Caco-2 (cell line): ENCODE measurements at regions of chr3 and their contacts with region 1.

Region 1: DNA sequence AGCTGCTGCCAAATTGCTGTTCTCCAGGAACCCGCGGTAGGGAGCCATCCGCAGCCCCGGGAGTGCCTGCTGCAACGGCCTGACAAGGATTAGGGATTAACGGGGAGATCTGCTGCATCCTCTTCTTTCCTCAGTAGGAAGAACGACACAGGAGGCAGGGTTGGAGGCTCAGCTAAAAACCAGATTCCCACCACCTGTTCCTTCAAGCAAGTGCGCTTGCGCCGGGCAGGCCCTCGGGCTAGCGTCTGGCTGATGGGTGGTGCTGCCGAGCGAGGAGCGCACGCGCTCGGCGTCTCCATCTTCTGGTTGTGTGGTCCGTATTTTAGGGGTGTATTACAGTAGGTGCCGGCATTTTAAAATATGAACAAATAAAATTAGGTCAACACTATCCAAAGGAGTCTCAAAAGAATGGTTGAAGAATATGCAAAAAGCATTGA is 25.4 kb upstream of the SLC25A26 start:
- DNase-seq: peak; percentile 58 to 62
- H3K4me3 ChIP-seq: peak overlapping the region; percentile 9
- H3K4me3 Mint-ChIP-seq: peak overlapping the region; percentile 45
- H3K27ac Mint-ChIP-seq: no peak overlapping the region
- H3K4me1 ChIP-seq: no peaks in the 10 kb centered on the region
- H3K4me1 Mint-ChIP-seq: no peaks in the 10 kb centered on the region
- H3K27me3 ChIP-seq: no peaks in the 10 kb centered on the region
- H3K27me3 Mint-ChIP-seq: no peaks in the 10 kb centered on the region
- CTCF ChIP-seq: no peak

Region 2: DNA sequence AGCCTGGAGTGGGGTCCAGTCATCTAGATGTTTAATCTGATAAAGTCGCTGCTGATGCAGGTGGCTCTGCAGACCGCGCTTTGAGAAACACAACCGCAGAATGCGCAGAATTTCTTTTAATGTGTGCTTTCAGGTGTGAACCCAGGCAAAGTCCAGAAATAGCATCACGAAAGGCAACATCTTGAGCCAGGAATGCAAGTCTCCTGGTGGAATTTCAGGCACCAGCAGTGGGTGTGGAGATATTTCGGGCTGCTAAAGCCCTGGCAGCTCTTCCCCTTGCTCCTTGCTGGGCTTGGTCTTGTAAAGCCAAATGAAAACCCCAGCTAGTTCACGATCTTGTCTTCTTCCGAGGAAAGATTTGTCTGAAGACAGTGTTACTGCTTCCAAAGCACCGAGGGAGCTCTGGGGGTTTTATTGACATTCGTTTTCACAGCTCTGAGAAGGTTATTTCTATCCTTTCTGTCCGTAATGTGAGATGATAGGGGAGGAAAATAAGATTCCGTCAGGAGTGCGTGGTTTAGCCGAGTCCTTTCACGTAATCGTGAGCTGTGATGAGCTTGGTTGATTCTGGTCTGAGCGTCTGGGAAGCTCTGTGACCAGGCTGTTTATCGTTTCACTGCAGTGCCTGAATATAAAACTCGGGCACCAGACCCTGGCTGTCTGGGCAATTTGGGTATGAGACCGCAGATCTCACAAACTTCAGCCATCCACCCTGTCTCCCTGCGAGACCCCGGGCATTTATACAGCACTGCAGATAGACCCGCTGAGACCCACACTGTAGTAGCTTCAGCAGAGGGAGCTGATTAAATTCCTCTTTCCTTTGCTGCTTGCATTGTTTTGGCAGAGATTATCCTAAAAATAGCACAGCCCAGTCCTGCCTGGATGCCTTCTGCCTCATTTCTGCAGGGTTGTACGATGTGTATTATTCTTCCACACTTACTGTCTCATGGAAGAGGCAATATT is 41.6 kb before region 1 on chr3:
- CTCF ChIA-PET with region 1: no interaction called
- POLR2A ChIA-PET with region 1: no interaction called
- intact Hi-C with region 1: loop called (anchors 5 kb)
- DNase-seq: peak; percentile 49 to 58
- H3K4me3 ChIP-seq: peak overlapping the region; percentile 31
- H3K4me3 Mint-ChIP-seq: peak overlapping the region; percentile 76
- H3K27ac Mint-ChIP-seq: peak overlapping the region; percentile 67
- H3K4me1 ChIP-seq: peaks cover 6% of the 10 kb centered on the region; the same call in 1 of the 2 replicates
- H3K4me1 Mint-ChIP-seq: no peaks in the 10 kb centered on the region
- H3K27me3 ChIP-seq: no peaks in the 10 kb centered on the region
- H3K27me3 Mint-ChIP-seq: no peaks in the 10 kb centered on the region
- CTCF ChIP-seq: no peak

Region 3: DNA sequence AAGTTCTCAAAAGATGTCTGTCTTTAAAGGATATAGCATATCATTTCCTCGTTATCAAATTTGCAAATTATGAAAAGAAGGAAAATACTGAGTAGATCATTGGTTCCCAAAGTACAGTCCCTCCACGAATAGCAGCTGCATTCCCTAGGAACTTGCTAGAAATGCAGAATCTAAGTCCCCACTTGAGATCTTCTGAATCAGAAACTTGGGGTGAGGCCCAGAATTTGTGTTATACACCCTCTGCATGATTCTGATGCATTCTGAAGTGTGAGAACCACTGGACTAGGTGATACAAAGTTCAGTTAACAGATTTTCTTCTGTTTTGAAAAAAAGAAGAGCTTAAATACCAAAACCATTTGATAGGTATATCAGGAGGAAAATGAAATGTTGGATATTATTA is 102.5 kb after region 1 on chr3:
- CTCF ChIA-PET with region 1: no interaction called
- POLR2A ChIA-PET with region 1: no interaction called
- intact Hi-C with region 1: no loop called
- DNase-seq: no peak
- H3K4me3 ChIP-seq: no peak overlapping the region
- H3K4me3 Mint-ChIP-seq: no peak overlapping the region
- H3K27ac Mint-ChIP-seq: no peak overlapping the region
- H3K4me1 ChIP-seq: peaks cover 12% of the 10 kb centered on the region
- H3K4me1 Mint-ChIP-seq: peaks cover 6% of the 10 kb centered on the region
- H3K27me3 ChIP-seq: no peaks in the 10 kb centered on the region
- H3K27me3 Mint-ChIP-seq: no peaks in the 10 kb centered on the region
- CTCF ChIP-seq: no peak